Caco-2 (cell line): ENCODE measurements at regions of chr14 and their contacts with region 1.

Region 1: GRCh38 chr14:33475623-33476022 is 475.3 kb downstream of the EGLN3 start:
- DNase-seq: peak; percentile 44 to 48
- H3K4me3 ChIP-seq: no peak overlapping the region
- H3K4me3 Mint-ChIP-seq: no peak overlapping the region
- H3K27ac Mint-ChIP-seq: no peak overlapping the region
- H3K4me1 ChIP-seq: no peaks in the 10 kb centered on the region
- H3K4me1 Mint-ChIP-seq: no peaks in the 10 kb centered on the region
- H3K27me3 ChIP-seq: no peaks in the 10 kb centered on the region; the same call in 1 of the 2 replicates
- H3K27me3 Mint-ChIP-seq: peaks cover 20% of the 10 kb centered on the region
- CTCF ChIP-seq: peak; percentile 30 to 44

Region 2: DNA sequence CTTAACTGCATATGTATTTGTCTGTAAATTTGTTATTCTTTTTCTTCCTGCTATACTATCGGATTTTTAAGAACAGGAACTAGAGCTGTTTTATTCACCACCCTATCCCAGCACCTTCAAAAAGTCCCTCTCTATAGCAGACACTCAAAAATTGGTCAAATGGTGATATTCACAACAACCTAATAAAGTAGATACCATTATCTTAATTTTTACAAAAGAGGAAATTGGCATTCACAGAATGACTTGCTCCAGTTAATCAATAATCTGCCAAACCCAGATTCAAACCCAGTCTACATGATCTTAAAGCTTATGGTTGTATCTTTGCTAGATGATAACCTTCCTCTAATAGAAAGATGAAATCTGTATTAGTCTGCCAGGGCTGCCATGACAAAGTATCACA is 48.6 kb after region 1 on chr14:
- CTCF ChIA-PET with region 1: no interaction called
- POLR2A ChIA-PET with region 1: no interaction called
- intact Hi-C with region 1: no loop called
- DNase-seq: no peak
- H3K4me3 ChIP-seq: no peak overlapping the region
- H3K4me3 Mint-ChIP-seq: no peak overlapping the region
- H3K27ac Mint-ChIP-seq: no peak overlapping the region
- H3K4me1 ChIP-seq: no peaks in the 10 kb centered on the region
- H3K4me1 Mint-ChIP-seq: no peaks in the 10 kb centered on the region
- H3K27me3 ChIP-seq: no peaks in the 10 kb centered on the region; the same call in 1 of the 2 replicates
- H3K27me3 Mint-ChIP-seq: peaks cover 16% of the 10 kb centered on the region
- CTCF ChIP-seq: no peak

Region 3: DNA sequence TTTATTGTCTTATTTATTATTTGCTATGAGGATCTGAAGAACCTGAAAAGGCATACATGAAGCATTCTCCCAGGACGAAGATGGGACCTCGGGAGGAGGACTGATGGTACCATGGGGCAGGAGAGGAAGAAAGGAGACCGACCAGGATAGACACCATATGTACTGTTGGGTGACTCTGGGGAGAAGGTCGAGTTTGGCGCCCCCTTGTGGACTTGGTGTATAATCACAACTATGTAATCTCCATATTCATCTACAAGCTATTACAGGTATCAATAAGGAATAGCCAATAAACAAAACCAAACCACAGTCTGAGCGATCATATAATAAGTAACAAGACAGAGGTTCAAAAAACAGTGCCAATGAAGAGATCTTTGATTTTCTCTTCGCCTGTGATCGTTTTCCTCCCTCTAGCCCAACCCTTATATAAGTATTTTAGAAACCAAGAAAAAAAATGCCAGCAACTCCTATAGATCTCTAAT is 847.4 kb after region 1 on chr14:
- CTCF ChIA-PET with region 1: no interaction called
- POLR2A ChIA-PET with region 1: no interaction called
- intact Hi-C with region 1: loop called (anchors 5 kb)
- DNase-seq: peak; percentile 56 to 71
- H3K4me3 ChIP-seq: no peak overlapping the region
- H3K4me3 Mint-ChIP-seq: no peak overlapping the region
- H3K27ac Mint-ChIP-seq: no peak overlapping the region
- H3K4me1 ChIP-seq: no peaks in the 10 kb centered on the region
- H3K4me1 Mint-ChIP-seq: no peaks in the 10 kb centered on the region
- H3K27me3 ChIP-seq: no peaks in the 10 kb centered on the region
- H3K27me3 Mint-ChIP-seq: no peaks in the 10 kb centered on the region
- CTCF ChIP-seq: peak; percentile 69 to 71